ENCODE measurements at regions of chr1 and their contacts with region 1.

Region 1: DNA sequence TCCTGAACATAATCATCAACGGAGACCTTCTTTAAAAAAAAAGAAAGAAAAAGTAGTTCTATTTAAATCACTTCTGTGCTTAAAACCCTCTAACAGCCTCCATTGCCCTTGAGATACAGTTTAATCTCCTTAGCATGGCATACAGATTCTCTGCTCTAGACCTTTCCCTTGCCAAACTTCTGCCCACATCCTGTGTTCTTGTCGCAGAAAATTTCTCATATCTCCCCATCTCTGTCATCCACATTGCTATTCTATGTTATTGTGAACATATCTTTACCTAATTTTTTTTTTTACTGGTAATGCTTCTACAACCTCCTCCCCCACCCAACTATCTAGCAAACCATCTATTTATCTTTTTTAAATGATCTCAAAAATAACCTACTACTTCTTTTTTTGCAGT is 135.7 kb upstream of the PROX1 start:
- DNase-seq: no peak
- ATAC-seq: no peak
- H3K4me3 ChIP-seq: no peak overlapping the region
- H3K27ac ChIP-seq: no peak overlapping the region
- H3K4me1 ChIP-seq: no peaks in the 10 kb centered on the region
- H3K27me3 ChIP-seq: peaks cover 0 to 11% of the 10 kb centered on the region in 2 experiments; a peak in 2 of 5 replicates
- CTCF ChIP-seq: no peak
- EP300 ChIP-seq: no peak
- POLR2A ChIP-seq: no peak
- RAD21 ChIP-seq: no peak

Region 2: DNA sequence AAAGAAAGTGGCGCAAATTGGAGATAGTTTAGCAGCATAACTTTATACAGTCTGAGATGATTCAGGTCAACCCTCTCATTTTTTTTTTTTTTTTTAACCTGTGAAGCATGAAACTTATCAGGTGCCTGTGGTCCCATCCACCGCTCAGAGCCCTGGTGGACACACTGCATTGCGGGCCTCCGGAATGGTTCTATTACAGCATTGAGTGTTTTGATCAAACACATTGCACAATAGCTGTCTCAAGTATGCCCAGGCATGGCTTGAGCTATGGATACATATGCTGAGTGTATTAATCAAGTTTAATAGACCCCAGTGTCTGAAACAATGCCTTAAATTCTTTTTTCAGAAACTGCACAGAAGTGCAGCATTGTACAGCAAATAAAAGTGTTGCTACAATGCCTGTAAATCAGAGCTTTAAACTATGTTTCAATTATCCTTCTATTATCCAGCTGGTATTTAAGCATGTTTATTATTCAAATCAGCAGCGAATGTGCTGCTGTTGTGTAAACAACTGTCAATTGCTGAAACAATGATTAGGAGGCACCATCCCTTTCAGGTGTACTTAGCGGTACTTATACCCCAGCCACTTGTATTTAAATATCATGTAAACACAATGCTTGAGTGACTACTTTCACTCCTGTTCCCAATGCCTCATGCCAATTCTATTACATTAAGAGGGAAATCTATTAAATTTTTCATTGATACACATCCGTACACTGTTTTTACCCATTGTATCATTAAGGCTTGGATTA is 344.5 kb before region 1 on chr1:
- CTCF ChIA-PET with region 1: no interaction called
- POLR2A ChIA-PET with region 1: no interaction called
- in situ Hi-C with region 1: no loop called
- intact Hi-C with region 1: no loop called
- DNase-seq: no peak
- ATAC-seq: no peak
- H3K4me3 ChIP-seq: no peak overlapping the region
- H3K27ac ChIP-seq: no peak overlapping the region
- H3K4me1 ChIP-seq: no peaks in the 10 kb centered on the region
- H3K27me3 ChIP-seq: no peaks in the 10 kb centered on the region; a peak in 1 of 5 replicates
- CTCF ChIP-seq: no peak
- EP300 ChIP-seq: no peak
- POLR2A ChIP-seq: no peak
- RAD21 ChIP-seq: no peak

Region 3: DNA sequence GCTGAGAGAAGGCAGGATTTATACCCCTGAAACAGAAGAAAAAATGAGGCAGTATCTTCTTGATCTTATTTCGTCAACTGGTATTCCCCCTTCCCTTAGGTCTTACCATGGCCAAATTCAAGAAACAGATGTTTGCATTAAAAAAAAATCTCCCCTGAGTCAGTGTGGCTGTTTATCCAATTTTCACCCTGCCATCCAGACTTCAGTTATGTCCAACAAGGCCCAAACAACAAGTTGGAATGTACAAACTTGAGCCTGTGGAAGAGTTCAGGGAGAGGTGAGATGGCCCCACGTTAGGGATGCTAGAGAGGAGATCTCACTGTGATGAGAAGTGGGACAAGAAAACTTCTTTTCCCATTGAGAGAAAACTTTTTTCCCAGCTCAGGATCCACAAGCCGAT is 11.5 kb before region 1 on chr1:
- CTCF ChIA-PET with region 1: no interaction called
- POLR2A ChIA-PET with region 1: no interaction called
- in situ Hi-C with region 1: no loop called
- intact Hi-C with region 1: loop called (anchors 1 kb)
- DNase-seq: no peak
- ATAC-seq: no peak
- H3K4me3 ChIP-seq: no peak overlapping the region
- H3K27ac ChIP-seq: no peak overlapping the region
- H3K4me1 ChIP-seq: no peaks in the 10 kb centered on the region
- H3K27me3 ChIP-seq: no peaks in the 10 kb centered on the region
- CTCF ChIP-seq: no peak
- EP300 ChIP-seq: no peak
- POLR2A ChIP-seq: no peak
- RAD21 ChIP-seq: no peak

Measured in K562 (cell line).